PC-9 (cell line): ENCODE measurements at regions of chr2 and their contacts with region 1.

Region 1: GRCh38 chr2:147910990-147911473 is 66.2 kb downstream of the ACVR2A start:
- DNase-seq: peak; percentile 15 to 40
- H3K4me3 ChIP-seq: no peak overlapping the region
- H3K27ac ChIP-seq: no peak overlapping the region
- H3K4me1 ChIP-seq: no peaks in the 10 kb centered on the region
- H3K27me3 ChIP-seq: no peaks in the 10 kb centered on the region
- CTCF ChIP-seq: peak; percentile 81

Region 2: DNA sequence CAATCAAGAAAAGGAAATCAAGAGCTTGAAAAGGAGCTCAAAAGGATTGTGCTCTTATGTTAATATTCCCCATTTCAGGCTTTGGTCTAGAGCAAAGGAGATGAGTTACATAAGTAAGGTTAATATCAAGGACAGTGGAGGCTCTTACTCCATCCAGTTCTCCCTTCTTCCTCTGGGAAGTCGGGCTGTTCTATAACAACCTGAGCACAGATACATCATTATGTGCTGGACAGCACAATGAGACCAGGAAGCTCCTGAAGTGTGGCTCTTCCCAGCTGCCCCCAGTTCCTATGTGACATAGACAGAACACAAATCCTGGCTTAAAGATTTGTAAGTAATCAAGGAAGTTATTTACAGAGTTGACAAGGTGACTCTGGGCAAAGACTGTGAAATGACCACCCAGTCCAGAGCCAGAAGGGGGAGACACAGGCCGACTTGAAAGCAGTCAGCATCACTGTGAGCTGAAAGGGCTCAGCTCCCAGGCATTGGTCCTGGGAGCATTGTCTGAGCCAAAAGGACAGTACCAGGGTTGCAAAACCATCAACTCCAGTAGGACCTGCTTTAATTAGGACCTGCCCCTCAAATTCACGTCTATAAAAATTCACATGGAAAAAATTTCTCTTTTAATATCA is 983.8 kb before region 1 on chr2:
- CTCF ChIA-PET with region 1: no interaction called
- POLR2A ChIA-PET with region 1: no interaction called
- intact Hi-C with region 1: loop called (anchors 1 kb)
- DNase-seq: peak in 1 of 2 experiments; percentile 49
- H3K4me3 ChIP-seq: no peak overlapping the region
- H3K27ac ChIP-seq: no peak overlapping the region
- H3K4me1 ChIP-seq: no peaks in the 10 kb centered on the region
- H3K27me3 ChIP-seq: no peaks in the 10 kb centered on the region
- CTCF ChIP-seq: peak; percentile 61

Region 3: DNA sequence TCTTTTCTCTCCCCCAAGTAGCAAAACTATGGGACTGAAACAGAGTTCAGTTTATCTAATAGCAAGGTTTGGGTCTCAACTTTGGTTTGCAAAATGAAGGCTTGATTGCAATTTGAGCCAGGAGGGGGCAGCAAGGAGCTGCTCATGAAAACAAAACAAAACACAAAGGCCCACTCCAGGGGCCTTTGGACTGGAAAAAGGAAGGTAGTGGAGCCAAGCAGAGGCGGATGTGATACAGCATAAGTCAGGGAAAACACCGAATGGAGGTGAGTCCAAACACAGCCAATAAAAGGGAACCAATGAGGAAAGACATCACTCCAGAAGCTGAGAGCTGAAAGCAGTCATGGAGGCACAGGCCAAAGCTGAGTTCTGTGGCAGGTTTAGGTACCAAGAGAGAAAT is 865.9 kb before region 1 on chr2:
- CTCF ChIA-PET with region 1: no interaction called
- POLR2A ChIA-PET with region 1: no interaction called
- intact Hi-C with region 1: loop called (anchors 2 kb)
- DNase-seq: peak in 1 of 2 experiments; percentile 25
- H3K4me3 ChIP-seq: no peak overlapping the region
- H3K27ac ChIP-seq: no peak overlapping the region
- H3K4me1 ChIP-seq: no peaks in the 10 kb centered on the region
- H3K27me3 ChIP-seq: no peaks in the 10 kb centered on the region
- CTCF ChIP-seq: peak; percentile 69

Region 4: DNA sequence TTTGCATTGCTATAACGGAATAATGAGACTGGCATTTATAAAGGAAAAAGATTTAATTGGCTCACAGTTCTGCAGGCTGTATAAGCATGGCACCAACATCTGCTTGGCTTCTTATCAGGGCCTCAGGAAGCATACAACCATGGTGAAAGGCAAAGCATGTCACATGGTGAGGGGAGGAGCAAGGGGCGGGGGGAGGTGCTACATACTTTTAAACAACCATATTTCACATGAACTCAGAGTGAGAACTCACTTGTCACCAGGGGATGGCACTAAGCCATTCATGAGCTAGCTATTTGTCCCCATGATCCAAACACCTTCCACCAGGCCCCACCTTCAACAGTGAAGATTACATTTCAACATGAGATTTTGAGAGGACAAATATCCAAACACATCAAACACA is 298.6 kb after region 1 on chr2:
- CTCF ChIA-PET with region 1: no interaction called
- POLR2A ChIA-PET with region 1: no interaction called
- intact Hi-C with region 1: no loop called
- DNase-seq: no peak
- H3K4me3 ChIP-seq: no peak overlapping the region
- H3K27ac ChIP-seq: no peak overlapping the region
- H3K4me1 ChIP-seq: no peaks in the 10 kb centered on the region
- H3K27me3 ChIP-seq: no peaks in the 10 kb centered on the region
- CTCF ChIP-seq: no peak